ENCODE measurements at regions of chr18 and their contacts with region 1.

Region 1: GRCh38 chr18:10145546-10145945 is 231.7 kb downstream of the VAPA start:
- DNase-seq: no peak
- H3K4me3 ChIP-seq: no peak overlapping the region
- H3K27ac ChIP-seq: no peak overlapping the region
- H3K4me1 ChIP-seq: peaks cover 0 to 14% (median 7%) of the 10 kb centered on the region in 4 donors
- H3K27me3 ChIP-seq: no peaks in the 10 kb centered on the region
- CTCF ChIP-seq: no peak
- EP300 ChIP-seq: no peak
- POLR2A ChIP-seq: no peak

Region 2: GRCh38 chr18:9683407-9684396 is 461.8 kb before region 1 on chr18:
- in situ Hi-C with region 1: no loop called
- intact Hi-C with region 1: no loop called
- DNase-seq: no peak
- H3K4me3 ChIP-seq: no peak overlapping the region
- H3K27ac ChIP-seq: peak overlapping the region; percentile 31 to 65 (median 58)
- H3K4me1 ChIP-seq: peaks cover 0 to 16% (median 2%) of the 10 kb centered on the region in 4 donors
- H3K27me3 ChIP-seq: no peaks in the 10 kb centered on the region
- CTCF ChIP-seq: peak in 2 of 5 experiments; percentile 30 to 34
- EP300 ChIP-seq: no peak
- POLR2A ChIP-seq: no peak

Region 3: DNA sequence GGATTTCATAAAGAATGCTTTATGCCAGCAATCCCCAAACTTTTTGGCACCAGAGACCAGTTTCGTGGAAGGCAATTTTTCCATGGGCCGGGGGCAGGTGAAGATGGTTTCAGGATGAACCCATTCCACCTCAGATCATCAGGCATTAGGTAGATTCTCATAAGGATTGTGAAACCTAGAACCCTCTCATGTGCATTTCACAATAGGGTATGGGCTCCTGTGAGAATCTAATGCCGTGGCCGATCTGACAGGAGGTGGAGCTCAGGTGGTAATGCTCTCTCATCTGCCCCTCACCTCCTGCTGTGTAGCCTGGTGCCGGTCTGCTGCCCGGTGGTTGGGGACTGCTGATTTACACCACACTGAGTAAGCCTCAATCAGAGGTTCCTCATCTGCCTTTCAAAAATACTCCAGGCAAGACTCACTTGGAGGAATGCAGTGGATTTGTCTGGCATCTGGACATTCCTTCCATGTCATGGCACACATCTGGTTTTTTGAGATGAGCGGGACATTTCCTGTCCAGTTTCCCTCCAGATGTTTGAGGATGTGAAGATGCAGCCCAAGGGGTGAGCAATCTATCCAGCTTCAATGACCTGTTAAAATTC is 45.9 kb before region 1 on chr18:
- in situ Hi-C with region 1: no loop called
- intact Hi-C with region 1: loop called (anchors 5 kb)
- DNase-seq: no peak
- H3K4me3 ChIP-seq: no peak overlapping the region
- H3K27ac ChIP-seq: no peak overlapping the region
- H3K4me1 ChIP-seq: peaks cover 0 to 6% (median 0%) of the 10 kb centered on the region in 4 donors
- H3K27me3 ChIP-seq: no peaks in the 10 kb centered on the region
- CTCF ChIP-seq: no peak
- EP300 ChIP-seq: no peak
- POLR2A ChIP-seq: no peak

Region 4: GRCh38 chr18:10170375-10170774 is 24.8 kb after region 1 on chr18:
- in situ Hi-C with region 1: no loop called
- intact Hi-C with region 1: no loop called
- DNase-seq: no peak
- H3K4me3 ChIP-seq: no peak overlapping the region
- H3K27ac ChIP-seq: no peak overlapping the region
- H3K4me1 ChIP-seq: no peaks in the 10 kb centered on the region
- H3K27me3 ChIP-seq: no peaks in the 10 kb centered on the region
- CTCF ChIP-seq: no peak
- EP300 ChIP-seq: no peak
- POLR2A ChIP-seq: no peak

Region 5: DNA sequence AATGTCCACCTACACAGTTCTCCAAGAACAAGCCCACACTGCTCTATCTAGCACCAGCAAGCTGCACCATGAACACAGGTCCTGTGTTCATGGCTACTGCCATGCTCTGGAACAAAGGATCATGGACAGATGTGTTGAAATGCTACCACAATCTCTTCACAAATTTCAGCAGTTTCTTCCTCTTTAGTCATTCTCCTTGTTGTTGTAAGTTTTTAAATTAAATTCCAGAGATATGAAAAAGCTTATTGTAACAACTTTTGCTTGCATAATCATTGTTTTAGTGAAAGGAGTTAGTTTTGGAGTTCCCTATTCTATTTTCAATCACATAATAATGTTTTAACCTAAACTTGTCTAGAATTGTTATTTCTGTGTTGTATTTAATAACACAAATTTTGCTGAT is 363.0 kb after region 1 on chr18:
- in situ Hi-C with region 1: no loop called
- intact Hi-C with region 1: no loop called
- DNase-seq: no peak
- H3K4me3 ChIP-seq: no peak overlapping the region
- H3K27ac ChIP-seq: no peak overlapping the region
- H3K4me1 ChIP-seq: no peaks in the 10 kb centered on the region
- H3K27me3 ChIP-seq: no peaks in the 10 kb centered on the region
- CTCF ChIP-seq: no peak
- EP300 ChIP-seq: no peak
- POLR2A ChIP-seq: no peak